Activated T-helper 1 cell treated with anti-CD3 and anti-CD28 coated beads, Interleukin-12 subunit alpha, Interleukin-12 subunit beta, Interleukin-2, Interleukin-4 antibody, amounts not matched to agents 30 ng/mL and 10 ng/mL and 1 ng/mL, durations not matched to agents 14 hours and 24 hours and 36 hours (primary cell): ENCODE measurements at regions of chr22 and their contacts with region 1.

Region 1: GRCh38 chr22:20268279-20269012 is at the start of gene RTN4R:
- DNase-seq: peak; percentile 45
- H3K4me3 Mint-ChIP-seq: peak within 1 kb of the TSS; percentile 82
- H3K27ac Mint-ChIP-seq: no peak within 1 kb of the TSS
- H3K4me1 Mint-ChIP-seq: no peaks in the 10 kb centered on the region
- H3K27me3 Mint-ChIP-seq: peaks cover 6% of the 10 kb centered on the region
- total RNA-seq, gene RTN4R: 1.7 and 1.9 TPM in 2 replicates

Region 2: DNA sequence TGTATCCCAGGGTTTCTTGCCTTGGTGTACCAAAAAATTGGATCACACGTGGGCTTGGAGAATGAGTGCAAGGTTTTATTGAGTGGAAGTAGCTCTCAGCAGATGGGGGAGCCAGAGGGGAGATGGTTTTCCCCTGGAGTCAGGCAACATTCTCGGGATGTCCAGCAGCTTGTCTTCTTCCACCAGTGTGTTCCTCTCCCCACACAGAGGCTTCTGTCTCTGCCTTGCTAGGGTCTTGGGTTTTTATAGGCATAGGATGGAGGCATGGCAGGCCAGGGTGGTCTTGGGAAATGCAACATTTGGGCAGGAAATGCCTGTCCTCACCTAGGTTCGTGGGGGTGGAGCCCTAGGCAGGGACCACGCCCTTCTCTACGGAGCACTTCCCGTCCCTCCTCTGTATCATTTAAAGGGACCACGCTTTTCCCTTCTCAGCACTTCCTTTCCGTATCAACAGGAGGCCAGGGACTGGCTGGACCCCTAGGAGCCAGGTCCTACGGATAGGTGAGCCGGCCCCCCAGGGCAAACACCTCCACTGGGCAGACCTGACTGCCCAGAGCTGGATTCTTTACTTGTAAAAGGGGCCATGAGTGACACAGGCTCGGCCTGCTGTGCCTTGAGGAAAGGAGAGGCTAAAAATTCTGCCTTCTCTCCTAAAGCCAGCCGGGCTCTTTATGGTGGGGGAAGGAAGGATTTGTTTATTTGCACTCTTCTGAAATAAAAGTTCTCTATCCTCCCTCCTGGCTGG is 62.3 kb before region 1 on chr22:
- intact Hi-C with region 1: loop called (anchors 10 kb)
- DNase-seq: peak; percentile 69
- H3K4me3 Mint-ChIP-seq: peak overlapping the region; percentile 95
- H3K27ac Mint-ChIP-seq: peak overlapping the region; percentile 90
- H3K4me1 Mint-ChIP-seq: peaks cover 19% of the 10 kb centered on the region
- H3K27me3 Mint-ChIP-seq: no peaks in the 10 kb centered on the region